Lower leg skin (tissue), 4 donors: ENCODE measurements at regions of chr1 and their contacts with region 1.

Region 1: GRCh38 chr1:13662493-13662892 is 37.5 kb upstream of the PRDM2 start:
- DNase-seq: peak in 1 of 2 donors; percentile 75
- H3K4me3 ChIP-seq: no peak overlapping the region
- CTCF ChIP-seq: no peak
- POLR2A ChIP-seq: no peak

Region 2: DNA sequence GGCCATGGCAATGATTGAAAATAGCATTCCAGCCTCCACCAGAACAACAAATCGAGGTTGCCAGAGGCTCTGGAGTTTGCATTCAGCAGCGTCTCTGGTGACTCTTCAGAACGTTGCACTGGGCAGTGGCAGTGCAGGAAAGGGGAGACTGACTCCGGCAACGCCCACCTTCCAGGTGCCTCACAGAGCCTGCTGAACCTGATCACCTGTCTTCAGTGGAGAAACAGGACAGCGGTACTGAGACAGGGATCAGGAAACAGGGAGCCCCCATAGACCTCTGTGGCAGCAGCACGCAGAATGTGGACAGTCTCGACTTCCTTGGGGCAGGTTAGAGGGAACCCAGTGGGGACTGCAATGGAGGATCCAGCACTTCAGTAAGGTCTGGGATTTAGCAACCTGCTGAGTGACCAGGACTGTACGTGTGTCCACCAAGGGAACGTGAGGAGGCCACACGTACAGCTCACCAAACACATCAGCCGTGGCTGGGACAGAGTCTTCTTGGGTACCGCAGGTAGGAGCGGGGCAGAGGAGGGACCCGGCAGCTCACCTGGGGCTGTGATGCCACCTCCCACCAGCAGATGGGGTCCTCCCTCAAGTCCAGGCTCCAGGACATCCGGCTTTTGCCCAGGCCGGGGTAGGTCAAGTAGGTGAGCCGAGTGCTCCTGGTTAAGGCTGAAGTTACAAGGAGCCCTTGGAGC is 166.1 kb after region 1 on chr1:
- intact Hi-C with region 1: loop called (anchors 10 kb)
- DNase-seq: no peak
- H3K4me3 ChIP-seq: no peak overlapping the region
- CTCF ChIP-seq: no peak
- POLR2A ChIP-seq: no peak